Mucosa of descending colon (tissue), 3 donors: ENCODE measurements at regions of chr19 and their contacts with region 1.

Region 1: GRCh38 chr19:6632002-6632621 is 37.8 kb downstream of the TNFSF14 start:
- DNase-seq: peak in 1 of 3 donors; percentile 95
- ATAC-seq: peak; percentile 89
- H3K4me3 ChIP-seq: no peak overlapping the region
- H3K4me1 ChIP-seq: no peaks in the 10 kb centered on the region
- CTCF ChIP-seq: peak; percentile 40

Region 2: DNA sequence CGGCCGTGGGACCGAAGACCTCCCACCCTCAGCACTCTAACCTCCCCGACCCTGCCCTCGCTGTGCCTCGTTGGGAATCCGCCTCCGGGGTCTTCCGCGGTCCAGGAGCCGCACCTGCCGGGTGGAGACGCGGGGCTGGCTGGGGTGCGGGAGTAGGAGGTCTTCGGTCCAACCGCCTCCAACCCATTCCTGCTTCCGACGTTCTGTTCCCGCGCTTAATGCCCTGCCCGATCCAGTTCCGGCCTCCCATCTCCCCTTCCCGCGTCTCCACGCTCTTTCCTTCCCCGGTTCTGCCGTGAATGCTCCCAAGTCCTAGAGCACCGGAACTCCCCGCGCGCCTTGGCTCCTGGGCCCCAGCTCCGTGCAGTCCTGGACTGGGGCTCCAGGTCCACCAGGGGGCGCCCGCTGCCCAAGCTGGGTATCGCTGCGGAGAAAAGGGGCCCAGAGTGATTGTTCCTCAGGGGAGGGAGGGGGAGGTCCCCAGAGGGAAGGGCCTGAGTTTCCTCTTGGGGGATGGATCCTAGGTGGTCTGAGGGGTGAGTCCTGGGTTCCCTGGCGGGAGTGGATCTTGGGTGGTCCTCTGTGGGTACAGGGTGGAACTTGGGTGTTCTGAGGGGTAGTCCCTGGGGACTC is 115.3 kb before region 1 on chr19:
- intact Hi-C with region 1: loop called in 1 of 2 experiments (anchors 10 kb)
- DNase-seq: peak; percentile 92 to 95 (median 94)
- ATAC-seq: peak; percentile 90
- H3K4me3 ChIP-seq: peak overlapping the region; percentile 26
- H3K4me1 ChIP-seq: no peaks in the 10 kb centered on the region
- CTCF ChIP-seq: peak; percentile 97

Region 3: DNA sequence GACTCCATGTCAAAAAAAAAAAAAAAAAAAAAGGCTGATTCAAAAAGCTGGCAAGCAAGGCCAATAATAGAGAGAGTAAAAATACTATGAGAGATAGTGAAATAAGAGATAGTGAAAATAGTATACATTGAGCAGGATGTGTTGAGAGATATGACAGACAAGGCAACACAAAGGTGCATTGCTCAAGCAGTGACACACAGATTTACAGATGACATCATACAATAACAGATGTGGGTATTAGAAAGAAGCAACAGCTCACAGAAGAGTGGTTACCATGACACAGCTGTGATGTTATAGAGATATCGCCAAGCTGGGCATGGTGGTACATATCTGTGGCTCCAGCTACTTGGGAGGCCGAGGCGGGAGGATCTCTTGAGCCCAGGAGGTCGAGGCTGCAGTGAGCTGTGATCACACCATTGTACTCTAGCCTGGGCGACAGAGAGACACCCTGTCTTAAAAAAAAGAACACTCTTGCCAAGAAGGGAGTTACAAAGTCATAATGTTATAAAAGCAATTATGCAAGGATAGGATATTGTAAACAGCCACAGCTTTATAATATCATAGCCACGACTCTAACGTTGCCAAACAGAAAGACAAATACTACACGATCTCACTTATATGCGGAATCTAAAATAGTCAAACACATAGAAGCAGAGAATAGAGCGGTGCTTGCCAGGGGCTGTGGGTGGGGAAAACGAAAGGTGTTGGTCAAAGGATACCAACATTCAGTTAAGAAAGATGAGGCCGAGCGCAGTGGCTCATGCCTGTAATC is 91.0 kb before region 1 on chr19:
- intact Hi-C with region 1: no loop called
- DNase-seq: no peak
- ATAC-seq: peak; percentile 34
- H3K4me3 ChIP-seq: no peak overlapping the region
- H3K4me1 ChIP-seq: peaks cover 9% of the 10 kb centered on the region
- CTCF ChIP-seq: no peak

Region 4: GRCh38 chr19:6862673-6863078 is 230.6 kb after region 1 on chr19:
- intact Hi-C with region 1: loop called in 1 of 2 experiments (anchors 10 kb)
- DNase-seq: peak; percentile 86 to 87 (median 86)
- ATAC-seq: peak; percentile 88
- H3K4me3 ChIP-seq: no peak overlapping the region
- H3K4me1 ChIP-seq: peaks cover 7% of the 10 kb centered on the region
- CTCF ChIP-seq: peak; percentile 71